H1 (cell line): ENCODE measurements at regions of chr9 and their contacts with region 1.

Region 1: GRCh38 chr9:135602789-135603481 is 36.4 kb downstream of the GLT6D1 start:
- DNase-seq: peak; percentile 17 to 86
- H3K4me3 ChIP-seq: no peak overlapping the region
- H3K27ac ChIP-seq: no peak overlapping the region
- H3K4me1 ChIP-seq: peaks cover 0 to 8% (median 3%) of the 10 kb centered on the region in 4 experiments; a peak in 4 of 7 replicates
- H3K27me3 ChIP-seq: no peaks in the 10 kb centered on the region
- CTCF ChIP-seq: peak in 2 of 3 experiments; percentile 71 to 78; a peak in 3 of 4 replicates
- EP300 ChIP-seq: no peak
- POLR2A ChIP-seq: no peak
- RAD21 ChIP-seq: peak; percentile 51 to 55

Region 2: DNA sequence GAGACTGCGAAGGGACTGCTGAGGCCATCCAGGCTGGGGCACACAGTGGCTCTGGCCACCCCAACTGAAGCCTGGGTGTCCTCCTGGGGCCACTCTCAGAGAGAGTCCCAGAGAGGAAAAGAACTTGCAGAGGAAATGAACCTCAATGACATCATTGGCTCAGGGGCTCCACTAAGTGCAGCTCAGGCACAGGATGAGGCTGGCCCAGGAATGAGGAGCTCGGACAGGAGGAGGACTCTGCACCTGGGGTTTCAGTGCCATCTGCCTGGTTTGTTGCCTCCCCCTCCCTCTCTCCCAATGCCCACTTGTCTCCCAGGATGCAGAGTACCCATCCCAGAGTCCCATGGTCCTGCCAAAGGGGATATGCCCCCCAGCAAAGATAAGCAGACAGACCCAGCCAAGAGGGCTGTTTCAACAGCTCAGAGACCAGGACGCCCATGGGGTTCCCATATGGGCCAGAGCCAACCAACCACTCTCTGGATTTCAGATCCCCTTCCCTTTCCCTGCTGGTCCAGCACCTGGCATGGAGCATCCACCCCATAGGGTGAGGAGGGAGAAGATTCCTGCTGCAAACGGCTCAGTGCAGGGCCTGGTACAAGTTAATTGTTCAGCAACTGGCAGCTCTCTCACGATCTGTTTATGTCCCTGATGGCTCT is 542.3 kb before region 1 on chr9:
- CTCF ChIA-PET with region 1: no interaction called
- POLR2A ChIA-PET with region 1: no interaction called
- DNase-seq: no peak
- H3K4me3 ChIP-seq: no peak overlapping the region
- H3K27ac ChIP-seq: no peak overlapping the region
- H3K4me1 ChIP-seq: no peaks in the 10 kb centered on the region
- H3K27me3 ChIP-seq: no peaks in the 10 kb centered on the region
- CTCF ChIP-seq: no peak
- EP300 ChIP-seq: no peak
- POLR2A ChIP-seq: no peak
- RAD21 ChIP-seq: no peak

Region 3: DNA sequence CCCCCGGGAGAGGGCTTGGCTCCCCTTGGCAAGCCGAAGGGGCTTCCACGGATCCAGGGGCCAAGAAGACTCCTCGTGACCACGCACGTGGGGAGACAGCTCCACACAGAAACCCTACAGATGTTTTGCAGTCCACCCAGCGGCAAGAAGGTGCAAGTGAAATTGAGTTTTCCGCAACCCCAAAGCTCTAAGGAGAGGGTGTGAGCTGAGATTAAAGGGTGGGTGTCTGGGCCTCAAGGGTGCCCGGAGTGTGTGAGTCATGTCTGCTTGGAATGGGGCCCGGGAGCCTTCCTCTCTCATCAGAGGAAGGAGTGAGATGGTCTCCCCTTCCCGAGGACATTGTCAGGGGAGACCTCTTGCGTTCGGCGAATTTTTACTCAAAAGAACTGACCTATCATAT is 436.4 kb before region 1 on chr9:
- CTCF ChIA-PET with region 1: no interaction called
- POLR2A ChIA-PET with region 1: no interaction called
- DNase-seq: no peak
- H3K4me3 ChIP-seq: no peak overlapping the region
- H3K27ac ChIP-seq: no peak overlapping the region
- H3K4me1 ChIP-seq: peaks cover 0 to 10% (median 3%) of the 10 kb centered on the region in 4 experiments; a peak in 6 of 7 replicates
- H3K27me3 ChIP-seq: no peaks in the 10 kb centered on the region
- CTCF ChIP-seq: no peak
- EP300 ChIP-seq: no peak
- POLR2A ChIP-seq: no peak
- RAD21 ChIP-seq: no peak

Region 4: GRCh38 chr9:135582966-135583687 is 19.8 kb before region 1 on chr9:
- CTCF ChIA-PET with region 1: interaction called, 58 read pairs
- POLR2A ChIA-PET with region 1: no interaction called
- DNase-seq: peak in 1 of 2 experiments; percentile 30
- H3K4me3 ChIP-seq: no peak overlapping the region
- H3K27ac ChIP-seq: no peak overlapping the region
- H3K4me1 ChIP-seq: no peaks in the 10 kb centered on the region; a peak in 1 of 7 replicates
- H3K27me3 ChIP-seq: no peaks in the 10 kb centered on the region
- CTCF ChIP-seq: no peak
- EP300 ChIP-seq: no peak
- POLR2A ChIP-seq: no peak
- RAD21 ChIP-seq: no peak

Region 5: GRCh38 chr9:135615666-135616618 is 13.0 kb after region 1 on chr9:
- CTCF ChIA-PET with region 1: interaction called, 59 read pairs
- POLR2A ChIA-PET with region 1: no interaction called
- DNase-seq: no peak
- H3K4me3 ChIP-seq: no peak overlapping the region
- H3K27ac ChIP-seq: peak overlapping the region; percentile 28; the same call in 1 of the 2 replicates
- H3K4me1 ChIP-seq: peaks cover 0 to 1% (median 0%) of the 10 kb centered on the region in 4 experiments; a peak in 1 of 7 replicates
- H3K27me3 ChIP-seq: no peaks in the 10 kb centered on the region
- CTCF ChIP-seq: peak in 2 of 3 experiments; percentile 40 to 46; a peak in 3 of 4 replicates
- EP300 ChIP-seq: no peak
- POLR2A ChIP-seq: no peak
- RAD21 ChIP-seq: no peak; a peak in 1 of 4 replicates

Region 6: GRCh38 chr9:135707252-135708138 is 104.6 kb after region 1 on chr9:
- CTCF ChIA-PET with region 1: interaction called, 18 read pairs
- POLR2A ChIA-PET with region 1: no interaction called
- DNase-seq: no peak
- H3K4me3 ChIP-seq: no peak overlapping the region
- H3K27ac ChIP-seq: no peak overlapping the region
- H3K4me1 ChIP-seq: peaks cover 0 to 8% (median 0%) of the 10 kb centered on the region in 4 experiments; a peak in 1 of 7 replicates
- H3K27me3 ChIP-seq: peaks cover 0 to 9% (median 4%) of the 10 kb centered on the region in 4 experiments; a peak in 3 of 7 replicates
- CTCF ChIP-seq: no peak
- EP300 ChIP-seq: no peak
- POLR2A ChIP-seq: no peak
- RAD21 ChIP-seq: no peak

Region 7: GRCh38 chr9:135719472-135719871 is 116.5 kb after region 1 on chr9:
- CTCF ChIA-PET with region 1: interaction called, 14 read pairs
- POLR2A ChIA-PET with region 1: no interaction called
- DNase-seq: no peak
- H3K4me3 ChIP-seq: no peak overlapping the region
- H3K27ac ChIP-seq: no peak overlapping the region
- H3K4me1 ChIP-seq: peaks cover 0 to 5% (median under 1%) of the 10 kb centered on the region in 4 experiments; a peak in 3 of 7 replicates
- H3K27me3 ChIP-seq: peaks cover 0 to 14% (median 14%) of the 10 kb centered on the region in 4 experiments; a peak in 6 of 7 replicates
- CTCF ChIP-seq: no peak
- EP300 ChIP-seq: no peak
- POLR2A ChIP-seq: no peak
- RAD21 ChIP-seq: no peak

Region 8: GRCh38 chr9:135787776-135788575 is 185.0 kb after region 1 on chr9:
- CTCF ChIA-PET with region 1: interaction called, 15 read pairs
- POLR2A ChIA-PET with region 1: no interaction called
- DNase-seq: no peak
- H3K4me3 ChIP-seq: no peak overlapping the region
- H3K27ac ChIP-seq: no peak overlapping the region
- H3K4me1 ChIP-seq: no peaks in the 10 kb centered on the region
- H3K27me3 ChIP-seq: no peaks in the 10 kb centered on the region
- CTCF ChIP-seq: no peak
- EP300 ChIP-seq: no peak
- POLR2A ChIP-seq: no peak
- RAD21 ChIP-seq: no peak